ENCODE measurements at regions of chr17 and their contacts with region 1.

Region 1: GRCh38 chr17:53012364-53012763 is 810.4 kb upstream of the KIF2B start:
- DNase-seq: no peak
- H3K4me3 ChIP-seq: no peak overlapping the region
- H3K27ac ChIP-seq: no peak overlapping the region
- H3K4me1 ChIP-seq: no peaks in the 10 kb centered on the region
- H3K27me3 ChIP-seq: no peaks in the 10 kb centered on the region
- CTCF ChIP-seq: no peak
- POLR2A ChIP-seq: no peak

Region 2: GRCh38 chr17:52899235-52899634 is 113.1 kb before region 1 on chr17:
- intact Hi-C with region 1: no loop called
- DNase-seq: no peak
- H3K4me3 ChIP-seq: no peak overlapping the region
- H3K27ac ChIP-seq: no peak overlapping the region
- H3K4me1 ChIP-seq: no peaks in the 10 kb centered on the region
- H3K27me3 ChIP-seq: no peaks in the 10 kb centered on the region
- CTCF ChIP-seq: no peak
- POLR2A ChIP-seq: no peak

Region 3: GRCh38 chr17:52995881-52996280 is 16.5 kb before region 1 on chr17:
- intact Hi-C with region 1: loop called (anchors 2 kb)
- DNase-seq: no peak
- H3K4me3 ChIP-seq: no peak overlapping the region
- H3K27ac ChIP-seq: no peak overlapping the region
- H3K4me1 ChIP-seq: no peaks in the 10 kb centered on the region
- H3K27me3 ChIP-seq: no peaks in the 10 kb centered on the region
- CTCF ChIP-seq: no peak
- POLR2A ChIP-seq: no peak

Measured in breast epithelium (tissue), 4 donors.